Activated T-helper 1 cell treated with anti-CD3 and anti-CD28 coated beads, Interleukin-12 subunit alpha, Interleukin-12 subunit beta, Interleukin-2, Interleukin-4 antibody, amounts not matched to agents 30 ng/mL and 10 ng/mL and 1 ng/mL, durations not matched to agents 14 hours and 24 hours and 36 hours (primary cell): ENCODE measurements at regions of chr4 and their contacts with region 1.

Region 1: DNA sequence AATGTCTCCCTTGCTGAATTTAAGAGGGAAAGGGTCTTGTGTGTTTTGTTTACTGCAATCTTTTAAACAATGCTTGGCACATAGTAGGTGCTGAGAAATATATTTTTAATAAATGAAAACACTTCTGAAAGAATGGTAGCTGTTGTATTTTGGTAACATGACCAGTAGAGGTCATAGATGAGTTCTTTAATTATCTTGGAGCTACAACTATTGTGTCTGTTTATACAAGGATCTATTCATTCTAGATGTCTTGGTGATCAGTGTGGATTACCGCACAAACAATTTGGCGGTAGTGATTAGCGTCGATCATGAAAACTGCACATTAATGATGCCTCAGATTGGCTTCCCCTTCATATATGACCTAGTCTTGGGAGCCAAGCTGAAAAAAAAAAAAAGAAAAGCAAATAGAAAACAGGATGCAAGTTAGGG is 21.4 kb upstream of the SCRG1 start:
- DNase-seq: no peak
- H3K4me3 Mint-ChIP-seq: no peak overlapping the region
- H3K27ac Mint-ChIP-seq: no peak overlapping the region
- H3K4me1 Mint-ChIP-seq: peaks cover 21% of the 10 kb centered on the region
- H3K27me3 Mint-ChIP-seq: no peaks in the 10 kb centered on the region

Region 2: GRCh38 chr4:173025131-173025530 is 395.2 kb before region 1 on chr4:
- intact Hi-C with region 1: loop called (anchors 1 kb)
- DNase-seq: no peak
- H3K4me3 Mint-ChIP-seq: no peak overlapping the region
- H3K27ac Mint-ChIP-seq: no peak overlapping the region
- H3K4me1 Mint-ChIP-seq: no peaks in the 10 kb centered on the region
- H3K27me3 Mint-ChIP-seq: peaks cover 14% of the 10 kb centered on the region

Region 3: DNA sequence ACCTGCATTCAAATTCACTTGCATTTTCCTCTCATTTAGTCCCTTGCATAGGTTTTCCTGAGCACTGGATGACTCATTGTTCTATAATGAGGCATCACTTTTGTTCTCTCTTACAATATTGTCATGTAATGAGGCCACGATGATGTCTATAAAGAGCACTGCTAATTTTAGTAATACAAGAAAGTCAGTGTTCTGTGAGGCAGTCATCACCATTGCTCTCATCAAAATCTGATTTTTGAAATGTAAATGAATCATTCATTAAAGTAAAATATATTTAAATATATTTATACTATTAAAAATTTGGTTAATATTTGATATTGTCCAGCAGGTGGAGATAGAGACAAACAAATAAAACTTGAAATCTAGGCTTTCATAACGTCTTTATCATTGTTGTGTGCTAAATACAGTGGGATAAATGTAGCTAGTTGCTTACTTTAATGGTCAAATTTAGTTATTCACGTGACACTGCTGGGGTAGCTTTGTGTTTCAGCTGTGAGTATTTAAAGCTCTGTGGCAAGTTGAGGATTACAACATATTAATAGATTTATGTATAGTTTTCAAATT is 101.6 kb before region 1 on chr4:
- intact Hi-C with region 1: loop called (anchors 1 kb)
- DNase-seq: no peak
- H3K4me3 Mint-ChIP-seq: no peak overlapping the region
- H3K27ac Mint-ChIP-seq: no peak overlapping the region
- H3K4me1 Mint-ChIP-seq: peaks cover 6% of the 10 kb centered on the region
- H3K27me3 Mint-ChIP-seq: no peaks in the 10 kb centered on the region

Region 4: GRCh38 chr4:173370477-173371291 is 49.7 kb before region 1 on chr4 and contains the start of gene SAP30:
- intact Hi-C with region 1: loop called (anchors 1 kb)
- DNase-seq: peak; percentile 92
- H3K4me3 Mint-ChIP-seq: peak within 1 kb of the TSS; percentile 100
- H3K27ac Mint-ChIP-seq: peak within 1 kb of the TSS; percentile 99
- H3K4me1 Mint-ChIP-seq: peaks cover 61% of the 10 kb centered on the region
- H3K27me3 Mint-ChIP-seq: no peaks in the 10 kb centered on the region
- total RNA-seq, gene SAP30: 29.3 and 30.9 TPM in 2 replicates

Region 5: GRCh38 chr4:173466101-173466500 is 45.8 kb after region 1 on chr4:
- intact Hi-C with region 1: no loop called
- DNase-seq: no peak
- H3K4me3 Mint-ChIP-seq: no peak overlapping the region
- H3K27ac Mint-ChIP-seq: no peak overlapping the region
- H3K4me1 Mint-ChIP-seq: no peaks in the 10 kb centered on the region
- H3K27me3 Mint-ChIP-seq: peaks cover 8% of the 10 kb centered on the region

Region 6: GRCh38 chr4:174156239-174156826 is 736.0 kb after region 1 on chr4:
- intact Hi-C with region 1: loop called (anchors 10 kb)
- DNase-seq: no peak
- H3K4me3 Mint-ChIP-seq: no peak overlapping the region
- H3K27ac Mint-ChIP-seq: no peak overlapping the region
- H3K4me1 Mint-ChIP-seq: no peaks in the 10 kb centered on the region
- H3K27me3 Mint-ChIP-seq: peaks cover 4% of the 10 kb centered on the region